ENCODE measurements at regions of chr1 and their contacts with region 1.

Region 1: GRCh38 chr1:13469343-13469742 is 44.5 kb downstream of the LRRC38 start:
- DNase-seq: peak; percentile 65
- H3K4me3 ChIP-seq: no peak overlapping the region
- H3K27ac ChIP-seq: no peak overlapping the region
- H3K4me1 ChIP-seq: no peaks in the 10 kb centered on the region
- CTCF ChIP-seq: peak; percentile 77

Region 2: DNA sequence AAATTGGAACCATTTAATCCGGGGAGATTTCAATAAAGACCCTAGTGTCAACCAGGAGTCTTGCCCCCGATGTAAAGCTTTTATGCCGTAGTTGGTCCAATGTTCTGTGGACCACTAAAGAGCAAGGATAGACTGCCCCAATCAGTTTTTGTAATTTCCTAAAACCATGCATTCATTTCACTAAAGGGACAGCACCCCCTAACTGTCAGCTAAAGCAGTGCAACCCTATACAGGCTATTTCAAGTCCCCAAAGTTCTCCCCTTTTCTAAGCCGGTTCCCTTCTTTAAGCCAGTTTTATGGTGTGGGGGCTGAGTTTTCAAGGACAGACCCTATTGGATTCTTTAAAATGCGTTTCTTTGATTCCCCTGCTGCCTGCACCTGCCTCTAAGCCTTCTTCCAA is 101.6 kb after region 1 on chr1:
- CTCF ChIA-PET with region 1: no interaction called
- POLR2A ChIA-PET with region 1: no interaction called
- intact Hi-C with region 1: loop called (anchors 2 kb)
- DNase-seq: peak; percentile 43
- H3K4me3 ChIP-seq: no peak overlapping the region
- H3K27ac ChIP-seq: no peak overlapping the region
- H3K4me1 ChIP-seq: no peaks in the 10 kb centered on the region
- CTCF ChIP-seq: peak; percentile 82